ENCODE measurements at regions of chr2 and their contacts with region 1.

Region 1: GRCh38 chr2:74507145-74507925 is at the start of gene PCGF1:
- DNase-seq: peak; percentile 97
- ATAC-seq: peak; percentile 91
- H3K4me3 ChIP-seq: peak within 1 kb of the TSS; percentile 75
- H3K27ac ChIP-seq: peak within 1 kb of the TSS; percentile 93
- H3K4me1 ChIP-seq: peaks cover 18% of the 10 kb centered on the region
- H3K27me3 ChIP-seq: peaks cover 18% of the 10 kb centered on the region
- CTCF ChIP-seq: peak; percentile 44
- POLR2A ChIP-seq: peak; percentile 81
- RAD21 ChIP-seq: no peak
- total RNA-seq, gene PCGF1: 29.2 and 31.4 TPM in 2 replicates

Region 2: DNA sequence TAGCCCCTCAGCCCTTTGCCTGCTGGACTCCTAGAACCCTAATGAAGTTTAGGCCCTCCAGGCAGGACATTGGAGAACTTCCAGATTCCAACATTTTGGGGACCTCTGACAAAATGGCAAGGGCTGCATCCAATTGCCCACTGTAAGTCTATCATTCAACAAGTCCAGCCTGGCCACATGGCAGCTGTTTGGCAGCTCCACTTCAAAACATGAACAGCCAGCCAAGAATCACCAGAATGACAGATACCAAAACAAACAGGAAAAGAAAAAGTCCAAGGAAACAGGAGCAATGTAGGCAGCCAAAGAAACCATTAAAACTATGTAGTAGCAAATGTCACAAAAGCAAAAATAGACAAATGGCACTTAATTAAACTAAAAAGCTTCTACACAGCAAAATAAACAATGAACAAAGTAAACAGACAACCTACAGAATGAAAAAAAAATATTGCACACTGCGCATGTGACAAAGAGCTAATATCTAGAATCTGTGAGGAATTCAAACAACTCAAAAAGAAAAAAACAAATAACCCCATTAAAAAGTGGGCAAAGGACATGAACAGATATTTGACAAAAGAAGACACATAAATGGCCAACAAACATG is 189.5 kb before region 1 on chr2:
- CTCF ChIA-PET with region 1: no interaction called
- POLR2A ChIA-PET with region 1: no interaction called
- dilution Hi-C with region 1: no loop called
- in situ Hi-C with region 1: no loop called
- intact Hi-C with region 1: no loop called
- DNase-seq: no peak
- ATAC-seq: no peak
- H3K4me3 ChIP-seq: no peak overlapping the region
- H3K27ac ChIP-seq: no peak overlapping the region
- H3K4me1 ChIP-seq: no peaks in the 10 kb centered on the region
- H3K27me3 ChIP-seq: peaks cover 19% of the 10 kb centered on the region
- CTCF ChIP-seq: no peak
- POLR2A ChIP-seq: no peak
- RAD21 ChIP-seq: no peak

Region 3: DNA sequence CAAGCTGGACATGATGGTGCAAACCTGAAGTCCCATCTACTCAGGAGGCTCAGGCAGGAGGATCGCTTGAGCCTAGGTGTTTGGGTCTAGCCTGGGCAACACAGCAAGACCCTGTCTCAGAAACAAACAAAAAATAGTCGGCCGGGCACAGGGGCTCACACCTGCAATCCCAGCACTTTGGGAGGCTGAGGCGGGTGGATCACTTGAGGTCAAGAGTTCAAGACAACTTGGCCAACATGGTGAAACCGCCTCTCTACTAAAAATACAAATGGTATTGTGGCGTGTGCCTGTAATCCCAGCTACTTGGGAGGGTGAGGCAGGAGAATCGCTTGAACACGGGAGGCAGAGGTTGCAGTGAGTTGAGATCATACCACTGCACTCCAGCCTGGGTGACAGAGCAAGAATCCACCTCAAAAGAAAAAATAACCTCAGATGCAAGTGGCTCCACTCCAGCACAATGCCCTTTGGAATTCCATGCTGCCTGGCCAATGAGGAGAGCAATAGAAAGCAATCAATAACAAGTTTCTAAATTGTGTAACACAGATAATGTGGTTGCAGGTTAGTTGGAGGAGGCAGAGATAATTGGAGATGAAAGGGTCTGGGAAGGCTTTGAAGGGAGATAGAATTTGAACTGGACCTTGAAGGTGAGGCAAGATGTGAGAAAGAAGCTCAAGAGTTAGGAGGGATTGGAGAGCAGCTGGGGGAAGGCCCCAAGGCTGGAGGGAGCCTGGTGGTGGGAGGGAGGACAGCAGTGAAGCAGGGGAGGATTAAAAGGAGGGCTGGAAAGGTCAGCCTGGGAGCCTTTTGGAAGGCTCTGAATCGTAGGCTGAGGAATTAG is 18.5 kb before region 1 on chr2:
- CTCF ChIA-PET with region 1: no interaction called
- POLR2A ChIA-PET with region 1: no interaction called
- dilution Hi-C with region 1: no loop called
- in situ Hi-C with region 1: no loop called
- intact Hi-C with region 1: no loop called
- DNase-seq: no peak
- ATAC-seq: no peak
- H3K4me3 ChIP-seq: no peak overlapping the region
- H3K27ac ChIP-seq: peak overlapping the region; percentile 38; the same call in 1 of the 2 replicates
- H3K4me1 ChIP-seq: peaks cover 5% of the 10 kb centered on the region; the same call in 1 of the 2 replicates
- H3K27me3 ChIP-seq: no peaks in the 10 kb centered on the region
- CTCF ChIP-seq: no peak
- POLR2A ChIP-seq: no peak
- RAD21 ChIP-seq: no peak

Region 4: GRCh38 chr2:74553892-74554645 is 46.7 kb after region 1 on chr2 and contains the start of gene LOXL3:
- CTCF ChIA-PET with region 1: no interaction called
- POLR2A ChIA-PET with region 1: no interaction called
- dilution Hi-C with region 1: no loop called
- in situ Hi-C with region 1: no loop called
- intact Hi-C with region 1: loop called (anchors 2 kb)
- DNase-seq: peak; percentile 88
- ATAC-seq: peak; percentile 85
- H3K4me3 ChIP-seq: peak within 1 kb of the TSS; percentile 78
- H3K27ac ChIP-seq: peak within 1 kb of the TSS; percentile 91
- H3K4me1 ChIP-seq: peaks cover 23% of the 10 kb centered on the region
- H3K27me3 ChIP-seq: no peaks in the 10 kb centered on the region
- CTCF ChIP-seq: no peak
- POLR2A ChIP-seq: peak; percentile 30; the same call in 1 of the 2 replicates
- RAD21 ChIP-seq: no peak
- total RNA-seq, gene LOXL3: 14.2 and 17.9 TPM in 2 replicates

Measured in IMR-90 (cell line).